ENCODE measurements at regions of chr11 and their contacts with region 1.

Region 1: GRCh38 chr11:72752088-72752914 is at the start of gene ARAP1:
- DNase-seq: peak; percentile 74
- ATAC-seq: peak; percentile 89
- H3K4me3 Mint-ChIP-seq: peak within 1 kb of the TSS; percentile 91
- H3K27ac Mint-ChIP-seq: peak within 1 kb of the TSS; percentile 89
- H3K4me1 Mint-ChIP-seq: peaks cover 53% of the 10 kb centered on the region
- H3K27me3 Mint-ChIP-seq: no peaks in the 10 kb centered on the region
- CTCF ChIP-seq: no peak
- total RNA-seq, gene ARAP1: 113 and 139 TPM in 2 replicates

Region 2: GRCh38 chr11:72712168-72712751 is 40.0 kb before region 1 on chr11:
- CTCF ChIA-PET with region 1: no interaction called
- POLR2A ChIA-PET with region 1: no interaction called
- intact Hi-C with region 1: no loop called
- DNase-seq: no peak
- ATAC-seq: no peak
- H3K4me3 Mint-ChIP-seq: no peak overlapping the region
- H3K27ac Mint-ChIP-seq: no peak overlapping the region
- H3K4me1 Mint-ChIP-seq: peaks cover 15% of the 10 kb centered on the region
- H3K27me3 Mint-ChIP-seq: no peaks in the 10 kb centered on the region
- CTCF ChIP-seq: no peak

Region 3: GRCh38 chr11:72781313-72782050 is 29.2 kb after region 1 on chr11:
- CTCF ChIA-PET with region 1: no interaction called
- POLR2A ChIA-PET with region 1: interaction called, 4 read pairs
- intact Hi-C with region 1: loop called (anchors 1 kb)
- DNase-seq: peak; percentile 59
- ATAC-seq: peak; percentile 82
- H3K4me3 Mint-ChIP-seq: peak overlapping the region; percentile 83
- H3K27ac Mint-ChIP-seq: no peak overlapping the region
- H3K4me1 Mint-ChIP-seq: peaks cover 35% of the 10 kb centered on the region
- H3K27me3 Mint-ChIP-seq: no peaks in the 10 kb centered on the region
- CTCF ChIP-seq: no peak

Region 4: DNA sequence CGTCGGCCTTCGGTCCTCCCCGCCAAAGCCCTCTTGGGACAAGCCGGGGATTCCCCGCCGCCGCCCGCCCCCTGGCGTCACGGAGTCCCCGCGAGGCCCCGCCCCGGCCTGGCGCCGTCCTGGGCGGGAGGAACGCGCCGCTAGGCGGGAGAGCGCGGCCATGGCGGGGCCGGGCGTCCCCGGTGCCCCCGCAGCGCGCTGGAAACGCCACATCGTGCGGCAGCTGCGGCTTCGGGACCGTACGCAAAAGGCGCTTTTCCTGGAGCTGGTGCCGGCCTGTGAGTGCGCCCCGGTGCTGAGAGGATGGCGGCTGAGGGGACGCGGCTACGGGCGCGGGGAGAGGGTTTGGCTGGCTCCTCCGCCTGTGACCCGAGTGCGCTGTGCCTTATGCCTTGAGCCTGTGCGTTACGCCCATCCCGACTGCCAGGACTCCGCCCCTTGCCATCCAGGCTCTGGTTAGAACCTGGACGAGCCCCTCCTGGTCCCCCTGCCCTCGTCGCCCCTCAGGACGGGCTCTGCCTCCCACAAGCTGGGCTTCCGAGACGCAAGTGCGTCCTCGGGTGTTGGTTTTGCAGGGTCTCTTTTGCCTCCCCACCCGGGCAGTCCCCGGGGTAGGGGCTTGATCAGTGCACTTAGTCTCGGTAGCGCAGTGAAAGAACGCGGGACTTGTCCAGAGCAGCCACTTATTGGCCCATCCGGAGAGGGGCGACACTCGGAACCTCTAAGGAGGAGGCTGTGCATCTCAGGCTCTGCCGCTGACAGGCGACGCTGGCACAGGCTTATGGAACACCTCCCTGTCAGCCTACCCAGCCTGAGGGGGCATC is 62.2 kb after region 1 on chr11 and contains the start of gene ATG16L2:
- CTCF ChIA-PET with region 1: no interaction called
- POLR2A ChIA-PET with region 1: interaction called, 3 read pairs
- intact Hi-C with region 1: loop called (anchors 2 kb)
- DNase-seq: peak; percentile 97
- ATAC-seq: peak; percentile 75
- H3K4me3 Mint-ChIP-seq: peak within 1 kb of the TSS; percentile 98
- H3K27ac Mint-ChIP-seq: peak within 1 kb of the TSS; percentile 94
- H3K4me1 Mint-ChIP-seq: peaks cover 54% of the 10 kb centered on the region
- H3K27me3 Mint-ChIP-seq: no peaks in the 10 kb centered on the region
- CTCF ChIP-seq: no peak
- total RNA-seq, gene ATG16L2: 73.5 and 96.7 TPM in 2 replicates

Region 5: DNA sequence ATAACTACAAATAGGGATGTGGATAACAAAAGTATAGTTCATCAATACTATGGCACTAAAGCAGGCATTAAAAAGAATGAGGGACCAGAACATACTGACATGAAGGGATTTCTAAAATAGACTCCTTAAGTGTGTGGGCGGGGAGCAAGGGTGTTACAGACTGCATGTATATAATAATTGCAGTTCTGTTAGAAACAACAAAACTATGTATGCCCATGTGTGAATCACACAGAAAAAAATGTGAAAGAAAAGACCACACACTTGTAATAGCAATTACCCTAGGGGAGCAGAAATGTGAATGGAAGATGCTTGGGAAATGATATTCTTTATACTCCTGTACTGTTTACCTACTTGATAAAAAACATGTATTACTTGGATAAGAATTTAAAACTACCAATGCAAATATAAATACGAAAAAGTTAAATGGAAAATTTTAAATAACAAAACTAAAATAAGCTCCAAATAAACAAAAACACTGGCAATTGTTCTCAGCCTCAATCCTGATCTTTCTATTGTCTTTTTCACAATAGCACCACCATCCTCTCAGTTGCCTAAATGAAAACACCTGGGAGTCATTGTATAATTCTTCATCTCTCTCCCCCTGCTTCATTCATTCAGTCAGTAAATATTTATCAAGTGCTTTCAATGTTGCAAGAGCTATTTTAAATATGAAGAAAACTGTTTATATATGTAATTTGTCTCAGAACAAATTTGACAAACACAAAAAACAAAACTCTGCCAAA is 260.0 kb after region 1 on chr11:
- CTCF ChIA-PET with region 1: no interaction called
- POLR2A ChIA-PET with region 1: no interaction called
- intact Hi-C with region 1: no loop called
- DNase-seq: no peak
- ATAC-seq: no peak
- H3K4me3 Mint-ChIP-seq: no peak overlapping the region
- H3K27ac Mint-ChIP-seq: peak overlapping the region; percentile 53
- H3K4me1 Mint-ChIP-seq: peaks cover 60% of the 10 kb centered on the region
- H3K27me3 Mint-ChIP-seq: no peaks in the 10 kb centered on the region
- CTCF ChIP-seq: no peak